Activated T-helper 1 cell treated with anti-CD3 and anti-CD28 coated beads, Interleukin-12 subunit alpha, Interleukin-12 subunit beta, Interleukin-2, Interleukin-4 antibody, amounts not matched to agents 30 ng/mL and 10 ng/mL and 1 ng/mL, durations not matched to agents 14 hours and 24 hours and 36 hours (primary cell): ENCODE measurements at regions of chr9 and their contacts with region 1.

Region 1: DNA sequence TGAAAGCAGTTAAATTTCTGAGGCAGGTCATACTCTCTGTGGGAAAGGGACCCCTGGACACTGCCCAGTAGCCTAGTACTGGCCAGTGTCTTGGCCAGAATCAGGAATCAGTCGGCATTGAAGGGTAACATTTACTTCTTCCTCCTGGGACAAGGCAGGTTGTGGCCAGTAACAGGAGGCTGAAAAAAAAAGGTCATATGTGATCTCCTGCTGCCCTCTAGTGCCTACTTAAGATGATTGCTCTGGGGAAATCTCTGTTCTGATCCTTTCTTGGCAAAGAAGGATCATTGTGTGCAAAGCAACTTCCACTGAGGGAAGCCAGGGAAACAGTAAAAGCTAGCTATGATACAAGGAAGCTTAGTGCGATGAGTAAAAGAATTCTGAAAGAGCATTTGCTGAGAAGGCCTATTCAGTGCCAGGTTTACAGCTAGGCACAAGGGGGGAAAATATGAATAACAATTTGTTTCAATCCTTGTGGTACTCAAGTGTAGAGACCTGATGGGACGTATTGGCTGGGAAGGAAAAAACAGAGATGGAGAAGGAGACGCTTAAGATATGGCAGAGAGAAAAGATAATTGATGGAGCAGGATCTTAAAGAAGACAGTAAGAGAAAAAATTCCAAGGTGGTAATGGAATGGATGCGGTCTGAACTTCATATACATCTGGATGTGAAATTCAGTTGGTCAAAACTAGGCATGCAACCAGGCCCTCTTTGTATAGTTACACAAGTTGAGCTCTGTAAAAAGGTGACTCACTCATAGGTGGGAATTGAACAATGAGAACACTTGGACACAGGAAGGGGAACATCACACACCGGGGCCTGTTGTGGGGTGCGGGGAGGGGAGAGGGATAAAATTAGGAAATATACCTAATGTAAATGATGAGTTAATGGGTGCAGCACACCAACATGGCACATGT is 25.8 kb upstream of the TRIM32 start:
- DNase-seq: no peak
- H3K4me3 Mint-ChIP-seq: no peak overlapping the region
- H3K27ac Mint-ChIP-seq: no peak overlapping the region
- H3K4me1 Mint-ChIP-seq: no peaks in the 10 kb centered on the region
- H3K27me3 Mint-ChIP-seq: no peaks in the 10 kb centered on the region

Region 2: DNA sequence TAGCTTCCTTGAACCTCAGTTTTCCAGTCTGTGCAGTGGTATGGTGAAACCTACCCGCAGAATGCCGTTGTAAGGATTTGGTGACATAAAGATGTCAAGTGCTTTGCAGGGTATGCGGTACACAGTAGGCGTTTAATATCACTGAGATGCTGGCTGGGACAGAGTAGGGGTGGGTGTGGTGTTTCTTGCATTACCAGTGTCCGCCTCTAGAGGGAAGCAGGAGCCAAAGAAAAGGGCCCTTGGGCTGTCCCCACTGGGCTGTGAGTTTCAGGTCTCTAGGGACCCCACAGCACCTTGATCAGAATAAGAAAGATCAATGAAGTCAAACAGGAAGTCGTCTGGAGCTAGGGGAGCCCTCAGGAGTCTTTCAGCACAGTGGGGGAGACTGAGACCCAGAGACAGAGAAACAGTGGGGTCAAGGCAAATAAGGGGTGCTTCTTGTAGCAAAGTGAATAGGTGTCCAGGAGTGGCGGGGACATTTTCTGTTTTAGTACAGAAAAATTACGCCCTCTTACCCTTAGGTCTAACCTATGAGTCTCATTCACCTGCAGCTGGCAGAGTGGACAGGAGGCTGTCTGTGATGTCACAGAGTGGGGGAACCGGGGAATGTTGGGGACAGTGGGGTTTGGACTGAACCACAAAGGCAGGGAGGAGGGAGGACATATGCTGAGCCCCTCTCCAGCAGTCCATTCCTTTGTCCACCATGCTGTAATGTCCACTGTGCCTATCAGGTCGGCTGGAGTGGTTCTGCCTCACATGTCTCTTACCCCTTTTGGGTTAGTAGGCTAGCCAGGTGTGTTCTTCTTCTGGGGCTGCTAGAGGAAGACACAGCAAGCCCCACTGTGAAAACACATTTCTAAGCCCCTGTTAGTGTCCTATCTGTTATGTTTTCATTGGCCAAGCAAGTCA is 1999.0 kb before region 1 on chr9:
- intact Hi-C with region 1: loop called (anchors 10 kb)
- DNase-seq: peak; percentile 54
- H3K4me3 Mint-ChIP-seq: no peak overlapping the region
- H3K27ac Mint-ChIP-seq: no peak overlapping the region
- H3K4me1 Mint-ChIP-seq: peaks cover 16% of the 10 kb centered on the region
- H3K27me3 Mint-ChIP-seq: peaks cover 13% of the 10 kb centered on the region

Region 3: DNA sequence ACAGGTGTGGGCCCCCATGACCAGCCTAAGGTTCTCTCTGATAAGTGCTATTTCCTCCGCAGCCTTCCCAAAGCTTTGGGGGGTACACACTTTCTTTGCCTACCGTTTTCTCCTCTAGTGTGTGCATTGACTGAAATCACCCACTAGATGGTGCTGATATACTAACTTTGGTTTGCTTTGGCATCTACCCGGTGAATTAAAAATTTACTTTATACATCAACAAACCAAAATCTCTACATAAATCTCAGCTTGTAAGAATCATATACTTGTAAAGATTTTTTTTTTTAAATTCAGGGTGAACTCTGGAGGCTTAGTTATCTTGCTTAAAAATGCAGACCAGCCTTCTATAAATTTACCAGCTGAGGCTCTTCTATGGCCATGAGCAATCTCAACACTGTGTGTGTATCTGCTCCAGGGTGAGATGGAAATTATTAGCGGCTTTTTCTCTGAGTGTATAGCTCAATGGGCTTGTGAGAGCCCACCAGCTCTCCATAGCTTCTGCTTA is 1067.7 kb before region 1 on chr9:
- intact Hi-C with region 1: loop called (anchors 1 kb)
- DNase-seq: no peak
- H3K4me3 Mint-ChIP-seq: no peak overlapping the region
- H3K27ac Mint-ChIP-seq: no peak overlapping the region
- H3K4me1 Mint-ChIP-seq: no peaks in the 10 kb centered on the region
- H3K27me3 Mint-ChIP-seq: peaks cover 12% of the 10 kb centered on the region

Region 4: GRCh38 chr9:115808108-115808507 is 853.2 kb before region 1 on chr9:
- intact Hi-C with region 1: no loop called
- DNase-seq: no peak
- H3K4me3 Mint-ChIP-seq: no peak overlapping the region
- H3K27ac Mint-ChIP-seq: no peak overlapping the region
- H3K4me1 Mint-ChIP-seq: no peaks in the 10 kb centered on the region
- H3K27me3 Mint-ChIP-seq: no peaks in the 10 kb centered on the region

Region 5: GRCh38 chr9:116149844-116150243 is 511.5 kb before region 1 on chr9:
- intact Hi-C with region 1: loop called (anchors 5 kb)
- DNase-seq: no peak
- H3K4me3 Mint-ChIP-seq: no peak overlapping the region
- H3K27ac Mint-ChIP-seq: no peak overlapping the region
- H3K4me1 Mint-ChIP-seq: no peaks in the 10 kb centered on the region
- H3K27me3 Mint-ChIP-seq: peaks cover 37% of the 10 kb centered on the region

Region 6: DNA sequence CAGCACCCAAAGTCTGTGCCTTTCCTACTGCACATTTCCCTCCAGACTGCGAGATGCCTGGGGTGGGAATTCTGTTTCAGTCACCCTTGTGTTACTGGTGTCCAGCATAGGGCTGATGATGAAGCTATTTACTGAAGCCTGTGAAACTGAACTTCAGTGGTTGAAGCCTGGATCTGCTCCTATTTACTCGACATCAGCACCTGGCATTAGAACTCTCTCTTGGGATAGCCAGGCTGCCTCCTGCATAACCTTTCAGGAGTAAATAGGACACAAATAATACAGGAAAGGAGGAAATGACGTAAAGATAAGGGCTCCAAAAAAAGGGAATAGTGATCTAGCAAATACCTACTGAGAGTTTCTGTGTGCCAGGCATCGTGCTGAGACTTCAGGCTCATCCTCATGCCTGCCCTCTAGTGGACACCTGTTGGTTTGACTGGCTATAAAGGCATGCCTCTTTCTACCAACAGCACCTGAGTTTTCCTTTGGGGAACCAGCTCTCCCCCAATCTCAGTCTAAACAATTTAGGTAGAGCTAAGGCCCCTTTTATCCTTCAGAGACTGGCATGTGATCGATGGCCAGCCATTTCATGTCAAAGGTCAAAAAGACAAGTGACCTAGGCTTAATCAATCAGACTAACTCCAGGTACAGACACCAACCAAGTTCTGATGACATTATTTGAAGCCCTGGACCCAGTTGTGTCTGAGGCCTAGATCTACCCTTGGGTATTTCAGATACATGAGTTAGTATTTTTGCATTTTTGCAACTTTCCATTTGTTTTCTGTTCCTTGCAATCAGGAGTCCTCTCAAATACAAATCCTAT is 166.3 kb before region 1 on chr9:
- intact Hi-C with region 1: loop called (anchors 1 kb)
- DNase-seq: no peak
- H3K4me3 Mint-ChIP-seq: no peak overlapping the region
- H3K27ac Mint-ChIP-seq: no peak overlapping the region
- H3K4me1 Mint-ChIP-seq: no peaks in the 10 kb centered on the region
- H3K27me3 Mint-ChIP-seq: no peaks in the 10 kb centered on the region

Region 7: DNA sequence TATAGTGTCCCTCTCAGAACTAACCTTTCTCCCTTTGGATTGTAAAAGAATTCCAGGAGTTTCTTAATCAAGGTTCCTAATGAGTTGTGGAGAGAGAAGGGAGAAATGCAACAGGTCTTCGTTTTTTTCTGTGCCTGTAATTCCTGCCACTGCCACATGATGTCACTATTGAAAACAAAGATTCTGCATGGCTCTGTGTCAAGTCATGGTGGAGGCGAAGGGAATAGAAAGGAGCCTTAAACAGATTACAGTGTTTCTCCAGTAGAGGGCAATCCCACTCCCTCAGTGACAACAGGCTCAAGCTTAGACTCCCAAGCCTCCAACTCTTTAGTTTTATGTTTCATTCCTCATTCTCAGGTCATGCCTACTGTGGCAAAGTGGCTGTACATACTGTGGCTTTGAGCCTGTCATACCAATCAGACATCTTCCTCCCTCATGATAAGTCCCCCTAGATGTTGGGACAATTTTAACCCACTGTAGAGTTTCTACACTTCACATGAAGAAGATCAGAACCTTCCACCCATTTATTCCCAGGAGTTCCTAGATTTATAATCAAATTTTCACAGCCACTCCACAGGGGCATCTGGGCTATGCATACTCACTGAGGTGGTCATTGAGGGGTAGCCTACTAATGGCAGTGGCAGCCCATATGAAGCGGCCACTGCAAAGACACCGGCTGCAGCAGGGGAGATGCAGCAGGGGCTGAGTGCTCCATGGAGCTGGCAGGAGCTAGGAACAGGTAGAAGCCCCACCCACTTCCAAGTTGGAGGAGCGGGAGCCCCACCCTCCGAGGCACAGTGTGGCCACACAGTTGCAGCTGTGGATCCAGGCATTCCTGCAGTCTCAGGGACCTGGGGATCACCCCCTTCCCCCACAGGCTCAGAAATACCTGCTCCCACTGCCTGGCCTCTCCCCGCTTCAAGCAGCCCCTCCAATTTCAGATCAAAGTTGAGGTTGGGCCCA is 71.6 kb before region 1 on chr9:
- intact Hi-C with region 1: loop called (anchors 1 kb)
- DNase-seq: no peak
- H3K4me3 Mint-ChIP-seq: no peak overlapping the region
- H3K27ac Mint-ChIP-seq: no peak overlapping the region
- H3K4me1 Mint-ChIP-seq: no peaks in the 10 kb centered on the region
- H3K27me3 Mint-ChIP-seq: no peaks in the 10 kb centered on the region

Region 8: GRCh38 chr9:116687074-116687753 is 25.9 kb after region 1 on chr9 and contains the start of gene TRIM32:
- intact Hi-C with region 1: no loop called
- DNase-seq: peak; percentile 91
- H3K4me3 Mint-ChIP-seq: peak within 1 kb of the TSS; percentile 90
- H3K27ac Mint-ChIP-seq: peak within 1 kb of the TSS; percentile 85
- H3K4me1 Mint-ChIP-seq: peaks cover 52% of the 10 kb centered on the region
- H3K27me3 Mint-ChIP-seq: no peaks in the 10 kb centered on the region
- total RNA-seq, gene TRIM32: 16.0 and 18.2 TPM in 2 replicates

Region 9: DNA sequence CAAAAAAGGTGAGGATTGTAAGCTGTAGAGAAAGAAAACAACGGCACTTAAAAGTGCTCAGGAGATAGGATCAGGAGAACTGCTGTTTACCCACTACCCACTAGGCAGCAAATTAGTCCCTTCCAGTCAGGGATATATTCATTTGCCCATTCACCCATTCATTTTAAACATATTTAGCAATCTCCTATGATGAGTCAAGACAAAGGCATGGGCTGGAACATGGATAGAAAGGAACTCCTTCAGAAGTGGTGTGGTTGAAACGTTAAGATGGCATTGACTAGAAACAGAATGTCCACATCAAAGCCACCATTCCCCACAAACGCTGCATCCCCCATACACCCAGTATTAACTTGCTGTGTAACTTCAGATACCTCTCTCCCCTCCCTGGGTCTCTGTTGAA is 527.8 kb after region 1 on chr9:
- intact Hi-C with region 1: no loop called
- DNase-seq: no peak
- H3K4me3 Mint-ChIP-seq: no peak overlapping the region
- H3K27ac Mint-ChIP-seq: no peak overlapping the region
- H3K4me1 Mint-ChIP-seq: no peaks in the 10 kb centered on the region
- H3K27me3 Mint-ChIP-seq: no peaks in the 10 kb centered on the region